ENCODE measurements at regions of chr9 and their contacts with region 1.

Region 1: GRCh38 chr9:129237195-129237611 is 59.1 kb upstream of the IER5L start:
- DNase-seq: peak in 8 of 9 donors; percentile 12 to 61 (median 38)
- ATAC-seq: peak; percentile 45
- H3K4me3 ChIP-seq: peak overlapping the region; percentile 66
- H3K4me3 Mint-ChIP-seq: peak overlapping the region; percentile 87 to 97 (median 92)
- H3K27ac ChIP-seq: peak overlapping the region; percentile 77
- H3K27ac Mint-ChIP-seq: peak overlapping the region; percentile 85 to 98 (median 95)
- H3K4me1 ChIP-seq: peaks cover 35 to 36% of the 10 kb centered on the region in 2 donors
- H3K4me1 Mint-ChIP-seq: peaks cover 38 to 77% (median 71%) of the 10 kb centered on the region in 7 donors
- H3K27me3 ChIP-seq: no peaks in the 10 kb centered on the region
- H3K27me3 Mint-ChIP-seq: no peaks in the 10 kb centered on the region

Region 2: DNA sequence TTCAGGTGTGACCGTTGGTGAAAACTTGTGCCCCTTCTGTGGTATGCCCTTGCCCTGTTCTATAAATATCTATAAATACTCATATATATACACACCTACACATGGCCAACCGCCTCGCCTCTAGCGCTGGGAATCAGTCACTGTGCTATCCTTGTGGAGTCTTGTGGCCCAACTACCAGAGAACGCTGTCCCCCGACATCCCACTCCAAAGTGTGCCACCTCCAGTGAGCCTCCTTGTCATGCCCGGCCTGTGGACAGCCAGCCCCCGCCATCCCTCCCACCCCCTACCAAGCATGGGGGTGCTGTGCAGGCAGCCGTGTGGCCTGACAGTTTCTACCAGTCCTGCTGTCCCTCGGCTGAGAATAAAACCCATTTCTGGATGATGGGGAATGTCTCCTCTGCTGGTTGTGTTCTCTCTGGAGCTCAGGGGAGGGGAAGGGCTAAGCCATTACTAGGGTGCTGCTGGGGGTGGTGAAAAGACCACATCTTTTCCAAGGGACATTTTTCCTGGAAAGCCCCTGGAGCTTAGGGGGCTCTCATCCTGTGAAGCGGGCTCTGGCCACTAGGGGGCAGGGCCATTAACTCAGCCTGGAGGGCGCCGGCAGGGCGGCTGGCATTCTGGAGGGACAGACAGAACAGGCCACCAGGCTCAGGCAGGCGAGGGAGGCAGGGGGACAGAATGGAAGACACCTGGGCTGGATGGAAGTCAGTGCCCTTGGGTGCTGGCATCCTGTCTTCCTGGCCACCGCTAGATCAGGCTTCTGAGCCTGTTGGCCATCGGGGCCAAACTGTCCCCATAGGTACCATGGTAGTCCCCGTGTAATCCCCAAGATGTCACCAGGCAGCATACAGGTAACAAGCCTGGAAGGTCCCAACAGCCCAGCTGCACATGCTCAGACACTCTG is 982.1 kb before region 1 on chr9:
- CTCF ChIA-PET with region 1: no interaction called
- POLR2A ChIA-PET with region 1: no interaction called
- intact Hi-C with region 1: no loop called
- DNase-seq: peak; percentile 20 to 63 (median 35)
- ATAC-seq: no peak
- H3K4me3 ChIP-seq: no peak overlapping the region
- H3K4me3 Mint-ChIP-seq: no peak overlapping the region
- H3K27ac ChIP-seq: no peak overlapping the region
- H3K27ac Mint-ChIP-seq: no peak overlapping the region
- H3K4me1 ChIP-seq: peaks cover 7 to 9% of the 10 kb centered on the region in 2 donors
- H3K4me1 Mint-ChIP-seq: peaks cover 6 to 16% (median 10%) of the 10 kb centered on the region in 7 donors
- H3K27me3 ChIP-seq: no peaks in the 10 kb centered on the region
- H3K27me3 Mint-ChIP-seq: peaks cover 0 to 17% (median 0%) of the 10 kb centered on the region in 5 donors

Region 3: DNA sequence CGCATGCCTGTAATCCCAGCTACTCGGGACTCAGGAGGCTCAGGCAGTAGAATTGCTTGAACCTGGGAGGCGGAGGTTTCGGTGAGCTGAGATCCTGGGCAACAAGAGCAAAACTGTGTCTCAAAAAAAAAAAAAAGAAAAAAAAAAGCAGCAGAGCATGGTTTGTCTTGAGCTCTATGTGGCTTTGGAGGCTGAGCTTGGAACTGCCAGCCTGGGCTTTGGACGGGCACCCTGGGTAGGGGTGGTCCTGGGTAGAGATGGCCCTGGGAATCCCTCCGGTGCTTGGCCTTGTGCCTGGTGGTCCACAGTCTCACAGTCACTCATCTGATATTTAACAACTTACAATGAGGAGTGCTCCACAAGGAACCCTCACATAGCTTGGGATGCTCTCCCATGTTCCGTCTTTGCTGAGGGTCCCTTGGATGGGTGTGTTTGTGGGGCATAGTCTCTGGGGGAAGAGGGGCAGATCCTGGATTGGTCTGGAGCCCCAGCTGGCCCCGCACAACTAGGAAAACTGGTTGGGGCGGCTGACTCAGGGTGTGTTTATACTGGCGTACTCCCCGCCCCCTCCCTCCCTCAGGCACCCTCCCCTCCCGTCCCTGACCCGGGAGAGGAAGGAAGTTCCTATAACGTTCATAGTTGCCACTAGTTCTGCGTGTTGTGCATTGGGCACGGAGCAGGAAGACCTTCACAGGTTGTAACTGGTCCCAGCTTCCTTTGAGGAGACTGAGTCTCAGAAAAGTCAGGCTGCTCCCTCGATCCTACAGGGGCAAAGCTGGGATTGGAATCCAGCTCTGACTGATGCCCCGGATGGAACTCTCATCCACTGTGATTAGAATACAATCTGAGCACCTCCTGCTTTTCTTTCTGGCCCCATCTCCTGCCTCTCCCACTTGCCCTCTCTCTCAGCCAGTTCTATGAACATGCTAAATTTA is 70.3 kb before region 1 on chr9:
- CTCF ChIA-PET with region 1: no interaction called
- POLR2A ChIA-PET with region 1: interaction called, 119 read pairs
- intact Hi-C with region 1: no loop called
- DNase-seq: peak in 3 of 9 donors; percentile 5 to 37 (median 15)
- ATAC-seq: peak; percentile 79
- H3K4me3 ChIP-seq: no peak overlapping the region
- H3K4me3 Mint-ChIP-seq: peak overlapping the region; percentile 54 to 78 (median 68)
- H3K27ac ChIP-seq: peak overlapping the region; percentile 29
- H3K27ac Mint-ChIP-seq: peak overlapping the region in 8 of 9 donors; percentile 25 to 77 (median 62)
- H3K4me1 ChIP-seq: peaks cover 0 to 10% of the 10 kb centered on the region in 2 donors
- H3K4me1 Mint-ChIP-seq: peaks cover 10 to 28% (median 18%) of the 10 kb centered on the region in 7 donors
- H3K27me3 ChIP-seq: no peaks in the 10 kb centered on the region
- H3K27me3 Mint-ChIP-seq: peaks cover 0 to 2% (median 0%) of the 10 kb centered on the region in 5 donors

Region 4: GRCh38 chr9:129202613-129203555 is 34.3 kb before region 1 on chr9:
- CTCF ChIA-PET with region 1: interaction called, 3 read pairs
- POLR2A ChIA-PET with region 1: interaction called, 58 read pairs
- intact Hi-C with region 1: loop called (anchors 1 to 2 kb)
- DNase-seq: peak; percentile 84 to 96 (median 92)
- ATAC-seq: peak; percentile 99
- H3K4me3 ChIP-seq: peak overlapping the region; percentile 77
- H3K4me3 Mint-ChIP-seq: peak overlapping the region; percentile 64 to 82 (median 74)
- H3K27ac ChIP-seq: peak overlapping the region; percentile 83
- H3K27ac Mint-ChIP-seq: peak overlapping the region in 8 of 9 donors; percentile 64 to 91 (median 84)
- H3K4me1 ChIP-seq: peaks cover 21 to 23% of the 10 kb centered on the region in 2 donors
- H3K4me1 Mint-ChIP-seq: peaks cover 13 to 26% (median 20%) of the 10 kb centered on the region in 7 donors
- H3K27me3 ChIP-seq: no peaks in the 10 kb centered on the region
- H3K27me3 Mint-ChIP-seq: peaks cover 0 to 11% (median 0%) of the 10 kb centered on the region in 5 donors

Region 5: GRCh38 chr9:129225815-129226214 is 11.4 kb before region 1 on chr9:
- CTCF ChIA-PET with region 1: interaction called, 5 read pairs
- POLR2A ChIA-PET with region 1: interaction called, 27 read pairs
- intact Hi-C with region 1: loop called in 1 of 2 experiments (anchors 1 kb)
- DNase-seq: peak in 7 of 9 donors; percentile 36 to 47 (median 40)
- ATAC-seq: peak; percentile 63
- H3K4me3 ChIP-seq: no peak overlapping the region
- H3K4me3 Mint-ChIP-seq: peak overlapping the region; percentile 11 to 61 (median 42)
- H3K27ac ChIP-seq: peak overlapping the region; percentile 55
- H3K27ac Mint-ChIP-seq: peak overlapping the region; percentile 29 to 85 (median 75)
- H3K4me1 ChIP-seq: peaks cover 19 to 23% of the 10 kb centered on the region in 2 donors
- H3K4me1 Mint-ChIP-seq: peaks cover 28 to 41% (median 34%) of the 10 kb centered on the region in 7 donors
- H3K27me3 ChIP-seq: no peaks in the 10 kb centered on the region
- H3K27me3 Mint-ChIP-seq: no peaks in the 10 kb centered on the region

Region 6: GRCh38 chr9:129250786-129251185 is 13.6 kb after region 1 on chr9:
- CTCF ChIA-PET with region 1: interaction called, 3 read pairs
- POLR2A ChIA-PET with region 1: interaction called, 36 read pairs
- intact Hi-C with region 1: no loop called
- DNase-seq: no peak
- ATAC-seq: no peak
- H3K4me3 ChIP-seq: no peak overlapping the region
- H3K4me3 Mint-ChIP-seq: no peak overlapping the region
- H3K27ac ChIP-seq: no peak overlapping the region
- H3K27ac Mint-ChIP-seq: peak overlapping the region in 1 of 9 donors; percentile 42
- H3K4me1 ChIP-seq: no peaks in the 10 kb centered on the region
- H3K4me1 Mint-ChIP-seq: peaks cover 0 to 9% (median 6%) of the 10 kb centered on the region in 7 donors
- H3K27me3 ChIP-seq: no peaks in the 10 kb centered on the region
- H3K27me3 Mint-ChIP-seq: peaks cover 0 to 43% (median 0%) of the 10 kb centered on the region in 5 donors

Region 7: GRCh38 chr9:129258124-129258822 is 21.1 kb after region 1 on chr9:
- CTCF ChIA-PET with region 1: interaction called, 3 read pairs
- POLR2A ChIA-PET with region 1: interaction called, 21 read pairs
- intact Hi-C with region 1: loop called (anchors 1 kb)
- DNase-seq: peak; percentile 81 to 91 (median 86)
- ATAC-seq: peak; percentile 97
- H3K4me3 ChIP-seq: peak overlapping the region; percentile 43
- H3K4me3 Mint-ChIP-seq: peak overlapping the region; percentile 45 to 91 (median 83)
- H3K27ac ChIP-seq: no peak overlapping the region
- H3K27ac Mint-ChIP-seq: peak overlapping the region in 8 of 9 donors; percentile 15 to 89 (median 62)
- H3K4me1 ChIP-seq: peaks cover 12 to 18% of the 10 kb centered on the region in 2 donors
- H3K4me1 Mint-ChIP-seq: peaks cover 16 to 48% (median 41%) of the 10 kb centered on the region in 7 donors
- H3K27me3 ChIP-seq: no peaks in the 10 kb centered on the region
- H3K27me3 Mint-ChIP-seq: peaks cover 0 to 48% (median 0%) of the 10 kb centered on the region in 5 donors

Region 8: DNA sequence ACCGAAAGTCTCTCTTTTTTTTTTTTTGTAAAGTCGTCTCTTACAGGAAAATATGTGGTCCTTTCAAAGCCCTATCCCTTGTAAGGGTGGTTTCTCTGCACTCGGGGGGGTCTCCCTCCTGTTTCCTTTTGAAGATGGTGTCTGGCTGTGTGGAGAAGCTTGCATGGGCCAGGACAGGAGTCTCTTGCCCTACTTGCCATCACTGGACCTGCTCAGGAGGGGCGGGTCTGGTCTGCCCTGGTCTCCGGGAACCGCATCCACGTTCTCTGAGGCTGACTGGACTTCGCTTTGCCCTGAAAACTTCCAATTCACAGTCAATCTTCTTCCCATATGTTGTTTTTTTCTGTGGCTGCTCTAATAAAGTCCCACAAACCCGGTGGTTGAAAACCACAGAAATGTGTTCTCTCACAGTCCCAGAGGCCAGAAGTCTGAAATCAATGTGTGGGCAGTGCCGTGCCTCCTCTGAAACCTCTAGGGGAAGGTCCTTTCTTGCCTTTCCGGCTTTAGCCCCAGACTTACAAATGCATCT is 33.8 kb after region 1 on chr9:
- CTCF ChIA-PET with region 1: no interaction called
- POLR2A ChIA-PET with region 1: interaction called, 5 read pairs
- intact Hi-C with region 1: loop called in 1 of 2 experiments (anchors 5 kb)
- DNase-seq: peak in 4 of 9 donors; percentile 6 to 20 (median 10)
- ATAC-seq: peak; percentile 42
- H3K4me3 ChIP-seq: peak overlapping the region; percentile 28
- H3K4me3 Mint-ChIP-seq: peak overlapping the region; percentile 41 to 81 (median 72)
- H3K27ac ChIP-seq: no peak overlapping the region
- H3K27ac Mint-ChIP-seq: peak overlapping the region; percentile 33 to 89 (median 82)
- H3K4me1 ChIP-seq: peaks cover 20 to 22% of the 10 kb centered on the region in 2 donors
- H3K4me1 Mint-ChIP-seq: peaks cover 18 to 37% (median 27%) of the 10 kb centered on the region in 7 donors
- H3K27me3 ChIP-seq: peaks cover 0 to 2% of the 10 kb centered on the region in 2 donors
- H3K27me3 Mint-ChIP-seq: peaks cover 0 to 20% (median 0%) of the 10 kb centered on the region in 5 donors

Region 9: DNA sequence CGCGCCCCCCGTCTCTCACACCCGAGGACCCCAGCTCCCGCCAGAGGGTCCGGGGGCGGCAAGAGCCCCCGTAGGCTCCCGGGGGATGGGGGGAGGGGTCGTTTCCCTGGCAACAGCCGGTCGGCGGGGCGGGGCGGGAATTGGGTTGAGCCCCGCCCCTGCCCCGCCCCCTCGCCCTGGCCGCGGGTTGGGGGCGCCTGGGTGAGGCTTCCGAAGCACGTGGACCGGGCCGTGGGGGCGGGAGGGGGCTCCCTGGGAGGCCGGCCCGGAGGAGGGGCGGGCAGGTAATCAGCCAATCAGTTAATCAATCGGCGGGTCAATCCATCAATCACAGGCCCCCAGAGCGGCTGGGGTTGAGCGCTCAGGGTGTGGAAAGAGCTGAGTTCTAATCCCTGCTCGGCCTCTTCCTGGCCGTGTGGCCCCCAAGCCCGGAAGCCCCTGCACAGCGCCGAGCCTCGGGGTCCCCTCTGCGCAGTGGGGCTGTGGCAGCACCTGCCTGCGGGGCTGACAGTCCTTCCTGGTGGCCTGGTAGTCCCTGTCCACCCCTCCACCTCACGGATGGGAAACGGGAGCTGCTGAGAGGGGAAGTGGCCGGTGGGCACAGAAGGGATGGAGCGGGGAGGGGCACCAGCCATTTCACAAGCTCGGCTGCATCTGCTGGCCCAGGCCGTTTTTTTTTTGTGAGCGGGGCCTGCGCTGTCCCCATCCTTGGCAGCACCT is 115.1 kb after region 1 on chr9:
- CTCF ChIA-PET with region 1: no interaction called
- POLR2A ChIA-PET with region 1: no interaction called
- intact Hi-C with region 1: no loop called
- DNase-seq: no peak
- ATAC-seq: peak; percentile 21
- H3K4me3 ChIP-seq: no peak overlapping the region
- H3K4me3 Mint-ChIP-seq: peak overlapping the region in 6 of 10 donors; percentile 58 to 80 (median 69)
- H3K27ac ChIP-seq: no peak overlapping the region
- H3K27ac Mint-ChIP-seq: peak overlapping the region in 1 of 9 donors; percentile 50
- H3K4me1 ChIP-seq: peaks cover 0 to 2% of the 10 kb centered on the region in 2 donors
- H3K4me1 Mint-ChIP-seq: peaks cover 0 to 8% (median 4%) of the 10 kb centered on the region in 7 donors
- H3K27me3 ChIP-seq: peaks cover 0 to 4% of the 10 kb centered on the region in 2 donors
- H3K27me3 Mint-ChIP-seq: peaks cover 0 to 18% (median 0%) of the 10 kb centered on the region in 5 donors

Measured in naive thymus-derived CD4-positive, alpha-beta T cell (primary cell).